Mammary epithelial cell (primary cell): ENCODE measurements at regions of chr4 and their contacts with region 1.

Region 1: DNA sequence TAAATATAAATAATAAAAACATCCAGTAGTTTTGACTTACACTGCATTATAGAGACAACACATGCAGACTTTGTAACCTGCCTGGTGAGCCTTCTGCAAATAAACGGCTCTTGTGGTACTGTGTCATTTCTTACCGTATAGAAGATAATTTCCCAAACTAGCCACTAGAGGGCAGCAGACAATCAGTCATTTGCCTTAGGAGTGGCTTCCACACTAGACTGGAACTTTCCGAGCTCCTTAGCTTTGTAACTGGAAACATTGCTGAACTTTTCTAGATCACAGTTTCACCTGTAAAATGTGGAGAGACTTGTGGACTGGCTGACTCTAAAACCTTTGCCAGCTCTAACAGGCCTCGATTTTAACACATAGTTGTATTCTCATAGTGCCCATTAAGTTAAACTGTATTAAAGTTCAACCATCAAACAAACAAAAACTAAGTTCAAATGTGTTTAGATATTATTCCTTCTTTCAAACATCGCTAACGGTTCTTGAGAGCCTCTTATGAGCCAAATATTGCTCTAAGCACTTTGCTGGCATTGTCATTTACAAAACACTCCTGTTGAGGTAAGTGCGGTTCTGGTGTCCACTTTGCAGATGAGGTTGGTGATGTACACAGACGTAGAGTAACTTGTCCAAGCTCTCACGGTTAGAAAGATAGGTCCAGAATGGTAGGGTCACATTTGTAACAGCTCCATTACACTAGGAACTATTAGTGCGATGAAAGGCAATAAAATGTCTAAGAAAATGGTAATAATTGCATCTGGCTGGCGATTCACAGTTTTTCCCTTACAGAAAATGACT is 345.5 kb downstream of the ANK2 start:
- DNase-seq: peak; percentile 78
- H3K4me3 ChIP-seq: no peak overlapping the region
- H3K27ac ChIP-seq: no peak overlapping the region
- H3K4me1 ChIP-seq: no peaks in the 10 kb centered on the region
- H3K27me3 ChIP-seq: no peaks in the 10 kb centered on the region
- CTCF ChIP-seq: peak; percentile 57 to 72

Region 2: DNA sequence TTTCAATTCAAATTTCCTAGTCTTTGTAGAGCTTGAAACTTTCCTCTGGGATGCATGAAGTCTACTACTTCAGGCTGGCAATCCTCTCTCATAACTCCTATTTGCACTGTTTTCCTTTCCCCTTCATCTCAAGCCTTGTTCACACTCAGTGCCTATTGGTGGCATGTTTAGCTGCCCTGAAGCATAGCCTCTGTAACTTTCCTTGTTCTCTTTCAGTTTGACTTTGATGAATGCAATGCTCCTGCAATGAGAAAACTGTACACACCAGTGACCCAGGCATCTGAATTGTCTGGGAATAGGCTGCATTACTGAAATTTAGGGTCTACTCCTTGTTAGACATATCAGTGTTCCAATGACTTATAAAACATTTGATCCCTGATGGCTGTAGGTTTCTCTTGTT is 263.8 kb before region 1 on chr4:
- CTCF ChIA-PET with region 1: no interaction called
- dilution Hi-C with region 1: no loop called
- in situ Hi-C with region 1: no loop called
- intact Hi-C with region 1: no loop called
- DNase-seq: no peak
- H3K4me3 ChIP-seq: no peak overlapping the region
- H3K27ac ChIP-seq: no peak overlapping the region
- H3K4me1 ChIP-seq: no peaks in the 10 kb centered on the region
- H3K27me3 ChIP-seq: peaks cover 5% of the 10 kb centered on the region
- CTCF ChIP-seq: no peak

Region 3: DNA sequence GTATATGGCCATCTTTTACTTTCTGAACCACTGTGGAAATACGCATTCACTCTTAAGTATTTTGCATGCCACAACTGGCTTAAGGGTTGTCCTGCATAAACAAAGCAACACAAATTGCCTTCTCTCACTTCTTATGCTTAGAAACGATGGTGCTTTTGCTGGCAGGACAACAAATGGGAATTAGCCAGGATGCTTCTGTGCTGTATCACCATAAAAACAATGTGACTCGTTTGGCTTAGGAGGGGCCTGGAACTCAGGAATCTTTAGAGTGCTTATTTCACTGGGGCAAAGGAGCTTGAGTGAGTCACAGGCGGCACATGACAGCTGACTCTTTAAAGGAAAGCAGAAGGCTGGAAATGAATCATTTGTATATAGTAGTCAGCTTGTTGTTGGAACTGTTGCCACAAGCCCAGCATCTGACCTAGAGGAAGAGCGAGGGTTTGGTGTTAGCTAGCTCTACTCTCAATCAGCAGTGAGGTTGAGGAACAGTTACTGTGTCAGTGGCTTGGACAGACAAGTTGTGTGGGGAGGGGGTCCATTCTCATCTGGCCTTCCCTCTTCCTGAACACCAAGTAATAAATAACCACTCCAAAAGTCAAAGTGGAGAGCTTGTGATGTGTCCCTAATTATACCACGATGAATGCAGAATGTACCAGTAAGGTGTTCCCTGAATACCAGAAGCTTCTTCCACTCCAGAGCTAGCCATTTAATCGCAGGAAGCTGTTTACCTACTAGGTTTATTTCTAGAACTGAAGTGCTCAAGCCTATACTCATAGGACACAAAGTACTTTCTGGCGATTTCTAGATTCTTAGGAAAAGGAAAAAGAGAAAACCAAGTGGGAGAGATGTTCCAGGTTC is 73.5 kb after region 1 on chr4:
- CTCF ChIA-PET with region 1: no interaction called
- dilution Hi-C with region 1: no loop called
- in situ Hi-C with region 1: no loop called
- intact Hi-C with region 1: loop called (anchors 2 kb)
- DNase-seq: peak; percentile 100
- H3K4me3 ChIP-seq: peak overlapping the region in 2 of 3 experiments; percentile 9 to 26
- H3K27ac ChIP-seq: peak overlapping the region; percentile 99
- H3K4me1 ChIP-seq: peaks cover 26% of the 10 kb centered on the region
- H3K27me3 ChIP-seq: no peaks in the 10 kb centered on the region
- CTCF ChIP-seq: no peak

Region 4: DNA sequence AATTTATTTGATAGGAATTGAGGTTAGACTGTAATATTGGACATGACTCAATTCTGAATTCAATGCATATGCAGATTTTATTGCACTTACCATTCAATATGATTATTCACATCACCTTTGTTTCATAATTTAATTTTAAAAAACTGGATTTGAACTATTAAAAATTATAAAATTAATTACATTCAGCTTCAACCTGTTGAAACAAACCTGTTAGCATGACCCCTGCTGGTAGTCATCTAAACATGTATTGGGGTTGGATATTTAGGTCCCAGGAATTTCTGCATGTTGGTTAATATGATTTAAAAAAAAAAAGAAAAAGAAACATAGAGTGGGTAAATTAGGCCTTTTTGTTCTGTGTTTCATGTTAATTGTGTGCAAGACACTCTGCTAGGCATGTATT is 498.6 kb after region 1 on chr4:
- CTCF ChIA-PET with region 1: no interaction called
- dilution Hi-C with region 1: no loop called
- in situ Hi-C with region 1: no loop called
- intact Hi-C with region 1: loop called (anchors 1 kb)
- DNase-seq: no peak
- H3K4me3 ChIP-seq: no peak overlapping the region
- H3K27ac ChIP-seq: no peak overlapping the region
- H3K4me1 ChIP-seq: no peaks in the 10 kb centered on the region
- H3K27me3 ChIP-seq: no peaks in the 10 kb centered on the region
- CTCF ChIP-seq: peak; percentile 35 to 51

Region 5: DNA sequence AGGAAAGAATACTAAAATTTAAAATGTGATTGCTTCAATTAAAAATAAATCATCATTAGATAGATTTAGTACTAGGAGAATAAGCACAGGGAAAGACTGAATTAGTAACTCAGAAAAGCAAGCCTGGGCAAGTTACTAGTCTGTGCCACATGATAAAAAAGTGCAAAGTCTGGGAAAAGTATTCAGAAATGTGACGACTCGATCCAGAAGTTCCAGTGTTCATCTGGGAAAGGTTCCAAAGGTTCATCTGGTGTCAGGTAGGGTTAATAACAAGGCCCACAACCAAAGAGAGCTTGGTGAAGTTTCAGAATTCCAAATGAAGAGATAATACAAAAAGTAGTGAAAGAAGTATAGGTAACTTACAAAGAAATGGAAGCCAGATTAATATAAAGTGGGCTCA is 662.8 kb after region 1 on chr4:
- CTCF ChIA-PET with region 1: no interaction called
- dilution Hi-C with region 1: no loop called
- in situ Hi-C with region 1: no loop called
- intact Hi-C with region 1: loop called (anchors 5 kb)
- DNase-seq: peak; percentile 62
- H3K4me3 ChIP-seq: peak overlapping the region in 1 of 3 experiments; percentile 5
- H3K27ac ChIP-seq: peak overlapping the region; percentile 59
- H3K4me1 ChIP-seq: peaks cover 11% of the 10 kb centered on the region
- H3K27me3 ChIP-seq: no peaks in the 10 kb centered on the region
- CTCF ChIP-seq: no peak

Region 6: GRCh38 chr4:114378306-114378903 is 983.5 kb after region 1 on chr4:
- CTCF ChIA-PET with region 1: no interaction called
- dilution Hi-C with region 1: no loop called
- in situ Hi-C with region 1: loop called in 1 of 2 experiments (anchors 10 kb)
- intact Hi-C with region 1: loop called (anchors 1 kb)
- DNase-seq: peak; percentile 32
- H3K4me3 ChIP-seq: no peak overlapping the region
- H3K27ac ChIP-seq: no peak overlapping the region
- H3K4me1 ChIP-seq: peaks cover 6% of the 10 kb centered on the region
- H3K27me3 ChIP-seq: no peaks in the 10 kb centered on the region
- CTCF ChIP-seq: peak; percentile 73 to 74

Region 7: GRCh38 chr4:114694770-114695169 is 1299.8 kb after region 1 on chr4:
- CTCF ChIA-PET with region 1: no interaction called
- dilution Hi-C with region 1: no loop called
- in situ Hi-C with region 1: no loop called
- intact Hi-C with region 1: loop called (anchors 10 kb)
- DNase-seq: peak; percentile 16
- H3K4me3 ChIP-seq: no peak overlapping the region
- H3K27ac ChIP-seq: no peak overlapping the region
- H3K4me1 ChIP-seq: no peaks in the 10 kb centered on the region
- H3K27me3 ChIP-seq: no peaks in the 10 kb centered on the region
- CTCF ChIP-seq: peak; percentile 43 to 56